ENCODE measurements at regions of chr9 and their contacts with region 1.

Region 1: DNA sequence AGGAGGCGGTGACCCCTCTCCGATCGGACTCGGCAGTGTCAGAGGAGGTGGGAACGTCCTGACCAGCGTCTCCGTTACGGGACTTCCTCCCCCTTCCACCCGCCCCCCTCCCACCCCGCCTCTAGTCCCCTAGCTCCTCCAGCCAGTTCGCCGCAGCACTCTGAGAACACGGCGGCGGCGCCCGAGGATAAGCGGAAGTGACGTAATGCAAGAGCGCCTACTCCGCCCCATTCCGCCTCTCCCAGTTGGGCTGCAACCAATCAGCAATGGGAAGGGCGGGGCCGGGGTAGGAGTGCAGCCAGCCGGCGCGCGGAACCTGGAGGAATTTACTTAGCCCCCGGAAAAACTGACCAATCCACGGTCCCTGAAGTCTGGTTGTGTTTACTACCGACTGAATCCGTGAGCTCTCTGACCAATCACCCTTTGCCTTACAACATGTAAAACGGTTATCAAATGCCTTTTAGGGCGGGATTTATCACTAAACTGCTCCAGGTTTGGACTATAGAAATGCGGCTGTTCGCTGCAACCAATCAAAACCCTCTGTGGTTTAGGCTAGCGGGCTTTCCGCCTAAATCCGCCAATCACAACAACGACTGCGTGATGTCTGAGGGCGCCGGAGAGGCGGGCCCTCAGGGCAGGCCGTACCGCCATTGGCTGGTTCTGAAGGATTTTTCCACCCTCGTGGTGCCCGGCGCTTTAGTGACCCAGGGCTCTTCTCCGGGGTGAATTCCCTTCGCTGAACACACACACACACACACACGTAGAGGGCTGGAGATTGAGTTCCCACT is at the start of gene ZBTB5:
- DNase-seq: peak; percentile 99
- H3K4me3 Mint-ChIP-seq: peak within 1 kb of the TSS; percentile 92
- H3K27ac Mint-ChIP-seq: peak within 1 kb of the TSS; percentile 95
- H3K4me1 Mint-ChIP-seq: peaks cover 22% of the 10 kb centered on the region
- H3K27me3 Mint-ChIP-seq: no peaks in the 10 kb centered on the region
- CTCF ChIP-seq: no peak
- total RNA-seq, gene ZBTB5: 8.9 and 9.0 TPM in 2 replicates

Region 2: GRCh38 chr9:37415011-37415719 is 50.3 kb before region 1 on chr9:
- CTCF ChIA-PET with region 1: interaction called, 4 read pairs
- POLR2A ChIA-PET with region 1: interaction called, 36 read pairs
- intact Hi-C with region 1: loop called (anchors 5 kb)
- DNase-seq: peak; percentile 85
- H3K4me3 Mint-ChIP-seq: peak overlapping the region; percentile 32
- H3K27ac Mint-ChIP-seq: peak overlapping the region; percentile 80
- H3K4me1 Mint-ChIP-seq: peaks cover 48% of the 10 kb centered on the region
- H3K27me3 Mint-ChIP-seq: no peaks in the 10 kb centered on the region
- CTCF ChIP-seq: peak; percentile 72

Region 3: GRCh38 chr9:37422289-37423104 is 42.9 kb before region 1 on chr9 and contains the start of gene GRHPR:
- CTCF ChIA-PET with region 1: interaction called, 4 read pairs
- POLR2A ChIA-PET with region 1: interaction called, 61 read pairs
- intact Hi-C with region 1: loop called (anchors 5 kb)
- DNase-seq: peak; percentile 75
- H3K4me3 Mint-ChIP-seq: peak within 1 kb of the TSS; percentile 92
- H3K27ac Mint-ChIP-seq: peak within 1 kb of the TSS; percentile 96
- H3K4me1 Mint-ChIP-seq: peaks cover 26% of the 10 kb centered on the region
- H3K27me3 Mint-ChIP-seq: no peaks in the 10 kb centered on the region
- CTCF ChIP-seq: no peak
- total RNA-seq, gene GRHPR: 114 and 121 TPM in 2 replicates

Region 4: DNA sequence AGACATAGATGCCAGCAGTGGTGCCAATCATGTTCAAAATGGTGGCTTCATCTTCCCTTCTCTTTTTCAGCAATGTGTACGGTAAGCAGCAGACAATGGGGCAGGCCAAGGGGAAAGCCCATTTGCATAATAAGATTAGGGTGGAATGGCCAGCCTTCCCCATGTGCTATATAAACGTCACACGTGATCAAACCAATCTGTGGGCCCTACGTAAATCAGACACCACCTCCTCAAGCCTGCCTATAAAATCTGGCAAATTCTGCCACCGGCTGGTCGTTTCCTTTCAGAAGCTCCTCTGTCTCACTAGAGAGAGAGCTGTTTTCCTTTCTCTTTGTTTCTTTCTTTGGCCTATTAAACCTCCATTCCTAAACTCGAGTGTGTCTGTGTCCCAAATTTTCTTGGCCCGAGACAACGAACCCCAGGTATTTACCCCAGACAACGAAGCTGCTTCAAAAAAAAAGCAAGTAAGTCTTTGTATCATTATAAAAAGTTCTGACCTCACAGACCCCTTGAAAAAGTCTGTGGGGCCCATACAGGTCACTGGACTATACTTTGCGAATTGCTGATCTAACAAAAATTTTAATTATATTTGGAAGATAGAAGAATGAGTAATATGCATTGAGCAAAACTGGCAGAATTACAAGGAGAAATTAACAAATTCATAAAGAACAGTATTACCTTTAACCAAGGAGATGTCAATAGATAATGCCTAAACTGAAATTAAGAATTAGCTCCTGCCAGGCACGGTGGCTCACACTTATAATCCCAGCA is 15.4 kb before region 1 on chr9:
- CTCF ChIA-PET with region 1: interaction called, 6 read pairs
- POLR2A ChIA-PET with region 1: interaction called, 55 read pairs
- intact Hi-C with region 1: no loop called
- DNase-seq: no peak
- H3K4me3 Mint-ChIP-seq: no peak overlapping the region
- H3K27ac Mint-ChIP-seq: no peak overlapping the region
- H3K4me1 Mint-ChIP-seq: peaks cover 19% of the 10 kb centered on the region
- H3K27me3 Mint-ChIP-seq: no peaks in the 10 kb centered on the region
- CTCF ChIP-seq: no peak

Region 5: DNA sequence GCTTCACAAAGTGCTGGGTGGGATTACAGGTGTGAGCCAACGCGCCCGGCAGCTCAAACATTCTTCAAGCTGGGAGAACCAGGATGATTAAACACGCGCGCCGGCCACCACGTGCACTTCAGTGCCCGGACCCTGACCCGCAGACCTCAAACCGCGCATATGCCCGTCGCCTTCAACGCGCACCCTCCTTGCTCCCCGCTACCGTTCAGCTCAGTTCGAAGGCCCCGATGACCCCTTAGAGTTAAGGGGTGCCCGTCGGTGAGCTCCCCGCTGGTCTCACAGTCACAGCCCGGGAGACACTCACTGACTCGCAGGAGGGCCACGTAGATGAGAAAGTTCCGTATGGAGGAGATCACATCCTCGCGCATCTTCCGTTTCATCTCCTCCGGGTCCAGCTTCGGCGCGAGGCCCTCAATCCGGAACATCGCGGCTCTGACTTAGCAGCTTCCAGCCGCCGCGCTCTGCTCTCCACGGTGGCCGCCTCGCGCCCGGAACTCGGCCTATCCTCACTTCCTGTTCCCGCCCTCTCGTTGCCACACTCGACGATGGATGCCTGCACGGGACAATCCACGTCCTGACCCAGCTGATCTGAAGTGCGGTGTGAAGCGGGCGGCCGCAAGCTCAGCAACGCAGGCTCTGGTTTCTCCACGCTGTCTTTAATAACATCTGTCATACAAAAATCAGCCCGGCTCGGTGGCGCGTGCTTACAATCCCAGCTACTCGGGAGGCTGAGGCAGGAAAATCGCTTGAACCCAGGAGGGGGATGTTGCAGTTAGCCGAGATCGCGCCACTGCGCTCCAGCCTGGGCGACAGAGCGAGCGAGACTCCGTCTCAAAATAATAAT is 126.9 kb after region 1 on chr9 and contains the start of gene TOMM5:
- CTCF ChIA-PET with region 1: no interaction called
- POLR2A ChIA-PET with region 1: interaction called, 25 read pairs
- intact Hi-C with region 1: no loop called
- DNase-seq: peak; percentile 93
- H3K4me3 Mint-ChIP-seq: peak within 1 kb of the TSS; percentile 96
- H3K27ac Mint-ChIP-seq: peak within 1 kb of the TSS; percentile 98
- H3K4me1 Mint-ChIP-seq: peaks cover 16% of the 10 kb centered on the region
- H3K27me3 Mint-ChIP-seq: no peaks in the 10 kb centered on the region
- CTCF ChIP-seq: no peak
- total RNA-seq, gene TOMM5: 151 and 164 TPM in 2 replicates

Region 6: GRCh38 chr9:37903647-37904444 is 438.4 kb after region 1 on chr9 and contains the start of gene SLC25A51:
- CTCF ChIA-PET with region 1: no interaction called
- POLR2A ChIA-PET with region 1: interaction called, 13 read pairs
- intact Hi-C with region 1: no loop called
- DNase-seq: peak; percentile 93
- H3K4me3 Mint-ChIP-seq: peak within 1 kb of the TSS; percentile 80
- H3K27ac Mint-ChIP-seq: peak within 1 kb of the TSS; percentile 95
- H3K4me1 Mint-ChIP-seq: peaks cover 30% of the 10 kb centered on the region
- H3K27me3 Mint-ChIP-seq: no peaks in the 10 kb centered on the region
- CTCF ChIP-seq: peak; percentile 93
- total RNA-seq, gene SLC25A51: 29.6 and 30.3 TPM in 2 replicates

Measured in MCF 10A (cell line).